Activated CD4-positive, alpha-beta T cell treated with anti-CD3 and anti-CD28 coated beads for 36 hours (primary cell): ENCODE measurements at regions of chr3 and their contacts with region 1.

Region 1: DNA sequence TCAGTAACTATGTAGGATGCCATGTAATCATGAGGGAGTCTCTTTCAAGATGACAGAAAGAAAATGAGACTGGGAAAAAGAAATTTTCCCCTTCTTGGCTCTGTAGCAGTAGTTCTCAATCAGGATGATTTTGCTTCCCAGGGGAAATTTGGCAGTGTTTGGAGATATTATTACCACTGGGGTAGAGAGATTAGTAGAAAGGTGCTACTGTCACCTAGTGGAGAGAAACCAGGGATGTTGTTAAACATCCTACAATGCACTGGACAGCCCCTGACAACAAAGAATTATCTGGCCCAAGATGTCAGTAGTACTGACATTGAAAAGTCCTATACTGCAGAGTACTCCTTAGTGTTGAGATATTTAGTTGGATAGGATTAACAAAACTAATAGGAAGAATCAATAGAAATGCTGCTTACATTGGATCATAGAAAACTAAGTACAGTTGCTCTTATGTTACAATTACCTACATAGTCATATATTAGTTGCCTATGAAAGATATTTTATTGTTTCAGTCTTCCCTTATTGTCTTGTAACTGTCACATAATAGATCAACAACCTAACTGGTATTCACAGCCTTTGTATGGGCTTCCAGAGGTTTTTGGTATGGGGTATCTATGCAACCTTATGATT is 433.3 kb downstream of the RAP2B start:
- DNase-seq: no peak
- ATAC-seq: no peak
- H3K4me3 Mint-ChIP-seq: no peak overlapping the region
- H3K27ac Mint-ChIP-seq: no peak overlapping the region
- H3K4me1 Mint-ChIP-seq: no peaks in the 10 kb centered on the region
- H3K27me3 Mint-ChIP-seq: no peaks in the 10 kb centered on the region

Region 2: GRCh38 chr3:153291056-153291685 is 304.1 kb before region 1 on chr3:
- CTCF ChIA-PET with region 1: interaction called, 4 read pairs
- POLR2A ChIA-PET with region 1: no interaction called
- intact Hi-C with region 1: loop called in 1 of 2 experiments (anchors 5 kb)
- DNase-seq: no peak
- ATAC-seq: peak; percentile 30
- H3K4me3 Mint-ChIP-seq: no peak overlapping the region
- H3K27ac Mint-ChIP-seq: no peak overlapping the region
- H3K4me1 Mint-ChIP-seq: peaks cover 39% of the 10 kb centered on the region
- H3K27me3 Mint-ChIP-seq: no peaks in the 10 kb centered on the region

Region 3: DNA sequence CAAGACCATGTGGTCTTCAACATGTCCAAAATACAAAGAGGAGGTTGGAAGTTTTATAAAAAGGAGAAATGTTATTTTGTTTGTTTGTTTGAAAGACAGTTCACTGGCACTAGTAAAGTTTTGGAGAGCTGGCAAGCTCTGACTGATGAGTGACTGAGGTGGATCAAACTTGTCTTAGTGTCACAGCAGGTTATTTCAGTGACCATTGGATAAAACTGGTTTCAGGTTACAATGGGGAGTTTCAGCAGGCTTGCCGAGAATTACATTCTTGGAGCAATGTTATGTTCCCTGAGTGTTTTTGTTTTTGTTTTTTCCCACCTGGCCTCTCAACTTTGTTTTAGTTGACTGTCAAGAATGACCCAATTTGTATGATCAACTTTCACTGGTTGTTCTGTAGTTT is 111.4 kb after region 1 on chr3:
- CTCF ChIA-PET with region 1: no interaction called
- POLR2A ChIA-PET with region 1: no interaction called
- intact Hi-C with region 1: no loop called
- DNase-seq: no peak
- ATAC-seq: no peak
- H3K4me3 Mint-ChIP-seq: no peak overlapping the region
- H3K27ac Mint-ChIP-seq: no peak overlapping the region
- H3K4me1 Mint-ChIP-seq: no peaks in the 10 kb centered on the region
- H3K27me3 Mint-ChIP-seq: peaks cover 7% of the 10 kb centered on the region